WTC11 (cell line): ENCODE measurements at regions of chr12 and their contacts with region 1.

Region 1: GRCh38 chr12:111812881-111813741 is 28.9 kb upstream of the MAPKAPK5 start:
- DNase-seq: peak; percentile 74
- ATAC-seq: peak; percentile 99
- H3K4me3 Mint-ChIP-seq: no peak overlapping the region
- H3K27ac Mint-ChIP-seq: no peak overlapping the region
- H3K4me1 Mint-ChIP-seq: no peaks in the 10 kb centered on the region
- H3K27me3 Mint-ChIP-seq: no peaks in the 10 kb centered on the region
- CTCF ChIP-seq: no peak; the same call in none of the 2 replicates

Region 2: DNA sequence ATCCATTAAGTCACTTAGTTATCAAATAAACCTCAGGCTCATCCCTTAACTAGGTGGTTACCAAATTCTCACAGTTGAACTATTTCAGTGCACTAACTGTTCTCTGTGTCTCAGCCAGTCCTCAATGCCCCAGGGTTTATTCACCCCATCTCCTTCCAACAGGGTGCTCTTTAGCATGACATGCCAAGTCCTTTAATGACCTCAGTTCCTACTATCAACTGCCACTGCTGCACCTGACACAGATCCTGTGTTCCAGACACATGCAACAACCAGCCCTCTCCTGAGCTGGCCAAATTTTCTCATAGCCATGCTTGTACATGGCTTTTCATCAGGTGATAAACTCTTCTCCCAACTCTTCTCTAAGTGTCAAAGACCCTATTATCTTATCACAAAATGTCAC is 294.0 kb before region 1 on chr12:
- CTCF ChIA-PET with region 1: no interaction called
- POLR2A ChIA-PET with region 1: no interaction called
- DNase-seq: no peak
- ATAC-seq: no peak
- H3K4me3 Mint-ChIP-seq: no peak overlapping the region
- H3K27ac Mint-ChIP-seq: no peak overlapping the region
- H3K4me1 Mint-ChIP-seq: no peaks in the 10 kb centered on the region
- H3K27me3 Mint-ChIP-seq: no peaks in the 10 kb centered on the region
- CTCF ChIP-seq: no peak

Region 3: GRCh38 chr12:111692575-111693210 is 120.4 kb before region 1 on chr12:
- CTCF ChIA-PET with region 1: interaction called, 12 read pairs
- POLR2A ChIA-PET with region 1: no interaction called
- DNase-seq: peak; percentile 28
- ATAC-seq: peak; percentile 92
- H3K4me3 Mint-ChIP-seq: no peak overlapping the region
- H3K27ac Mint-ChIP-seq: no peak overlapping the region
- H3K4me1 Mint-ChIP-seq: no peaks in the 10 kb centered on the region
- H3K27me3 Mint-ChIP-seq: no peaks in the 10 kb centered on the region
- CTCF ChIP-seq: no peak

Region 4: GRCh38 chr12:111753144-111753881 is 59.8 kb before region 1 on chr12:
- CTCF ChIA-PET with region 1: interaction called, 80 read pairs
- POLR2A ChIA-PET with region 1: interaction called, 7 read pairs
- DNase-seq: peak; percentile 75
- ATAC-seq: peak; percentile 97
- H3K4me3 Mint-ChIP-seq: no peak overlapping the region
- H3K27ac Mint-ChIP-seq: no peak overlapping the region
- H3K4me1 Mint-ChIP-seq: peaks cover 12% of the 10 kb centered on the region
- H3K27me3 Mint-ChIP-seq: no peaks in the 10 kb centered on the region
- CTCF ChIP-seq: peak; percentile 62

Region 5: DNA sequence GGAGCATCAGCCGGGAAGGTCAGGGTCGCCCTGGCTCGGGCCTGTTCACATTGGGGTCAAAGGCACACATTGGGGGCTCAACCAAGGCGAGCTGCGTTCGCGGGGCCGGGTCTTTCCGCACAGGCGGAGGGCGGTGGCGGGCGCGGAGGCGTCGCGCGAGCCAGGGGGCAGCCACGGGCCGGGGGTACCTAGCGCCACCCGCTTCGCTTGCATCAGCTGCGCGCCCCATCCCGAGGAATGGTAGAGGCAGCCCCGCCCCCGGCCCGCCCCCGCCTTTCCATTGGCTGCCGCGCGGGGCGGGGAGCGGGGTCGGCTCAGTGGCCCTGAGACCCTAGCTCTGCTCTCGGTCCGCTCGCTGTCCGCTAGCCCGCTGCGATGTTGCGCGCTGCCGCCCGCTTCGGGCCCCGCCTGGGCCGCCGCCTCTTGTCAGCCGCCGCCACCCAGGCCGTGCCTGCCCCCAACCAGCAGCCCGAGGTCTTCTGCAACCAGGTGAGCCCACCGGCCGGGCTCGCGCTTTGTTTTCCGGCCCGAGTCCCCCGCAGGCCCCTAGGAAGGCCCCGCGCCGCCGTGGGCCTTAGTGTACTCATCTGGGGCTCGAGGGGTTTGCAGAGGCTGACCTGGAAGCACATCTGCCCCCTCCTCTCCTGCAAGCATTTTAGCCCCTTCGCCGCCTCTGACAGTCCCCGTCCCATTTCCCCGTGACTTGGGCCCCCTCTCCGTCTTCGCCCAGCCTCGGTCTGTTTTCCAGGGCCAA is 46.3 kb before region 1 on chr12 and contains the start of gene ALDH2:
- CTCF ChIA-PET with region 1: interaction called, 19 read pairs
- POLR2A ChIA-PET with region 1: interaction called, 3 read pairs
- DNase-seq: peak; percentile 89
- ATAC-seq: peak; percentile 94
- H3K4me3 Mint-ChIP-seq: peak within 1 kb of the TSS; percentile 86
- H3K27ac Mint-ChIP-seq: peak within 1 kb of the TSS; percentile 44; the same call in 1 of the 2 replicates
- H3K4me1 Mint-ChIP-seq: peaks cover 18% of the 10 kb centered on the region
- H3K27me3 Mint-ChIP-seq: peaks cover 27% of the 10 kb centered on the region
- CTCF ChIP-seq: no peak
- total RNA-seq, gene ALDH2: 32.6 to 36.7 TPM (median 36.7 TPM) in 3 replicates